ENCODE measurements at regions of chr1 and their contacts with region 1.

Region 1: GRCh38 chr1:116570358-116571200 is at the start of gene CD58:
- DNase-seq: peak; percentile 84
- ATAC-seq: peak; percentile 86
- H3K4me3 Mint-ChIP-seq: peak within 1 kb of the TSS; percentile 99
- H3K27ac Mint-ChIP-seq: peak within 1 kb of the TSS; percentile 95
- H3K4me1 Mint-ChIP-seq: peaks cover 80% of the 10 kb centered on the region
- H3K27me3 Mint-ChIP-seq: no peaks in the 10 kb centered on the region
- CTCF ChIP-seq: no peak
- total RNA-seq, gene CD58: 146 and 160 TPM in 2 replicates

Region 2: DNA sequence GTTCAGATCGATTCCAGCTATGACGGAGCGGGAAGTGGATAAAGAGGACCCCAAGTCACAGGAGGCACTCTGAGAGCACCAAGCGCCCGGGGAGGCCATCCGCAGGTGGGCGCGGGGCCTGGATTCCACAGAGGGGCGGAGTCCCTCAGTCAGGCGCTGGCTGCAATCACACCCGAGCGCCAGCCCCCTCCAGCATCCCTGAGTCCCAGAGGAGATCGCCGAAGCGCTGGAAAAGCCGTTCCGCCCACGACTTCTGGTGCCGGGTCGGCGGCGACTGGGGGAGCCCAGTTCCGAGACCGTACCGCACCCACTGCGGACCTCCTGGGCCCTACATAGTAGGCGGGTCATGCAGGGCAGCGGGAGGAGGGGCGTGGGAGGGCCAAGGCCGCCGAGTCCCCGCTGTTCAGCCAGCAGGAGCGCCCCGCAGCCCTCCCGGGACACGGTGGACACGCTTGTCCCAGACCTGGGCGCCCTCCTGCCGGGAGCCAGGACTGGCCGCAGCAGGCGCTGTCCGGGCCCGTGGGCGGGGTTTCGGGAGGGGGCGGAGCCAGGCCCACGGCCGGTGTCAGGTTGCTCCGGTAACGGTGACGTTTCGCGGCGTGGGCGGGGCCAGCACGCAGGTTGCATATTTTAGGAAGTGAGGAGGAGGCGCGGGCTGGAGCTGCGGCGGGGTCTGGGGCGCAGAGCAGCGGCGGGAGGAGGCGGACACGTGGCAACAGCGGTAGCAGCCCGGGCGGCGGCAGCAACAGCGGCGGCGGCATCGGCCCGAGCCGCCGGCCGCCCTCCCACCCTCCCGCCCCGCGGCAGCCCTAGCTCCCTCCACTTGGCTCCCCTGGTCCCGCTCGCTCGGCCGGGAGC is 197.8 kb before region 1 on chr1 and contains the start of gene ATP1A1:
- CTCF ChIA-PET with region 1: no interaction called
- POLR2A ChIA-PET with region 1: interaction called, 8 read pairs
- intact Hi-C with region 1: loop called (anchors 1 kb)
- DNase-seq: peak; percentile 99
- ATAC-seq: peak; percentile 75
- H3K4me3 Mint-ChIP-seq: peak within 1 kb of the TSS; percentile 91
- H3K27ac Mint-ChIP-seq: peak within 1 kb of the TSS; percentile 94
- H3K4me1 Mint-ChIP-seq: peaks cover 38% of the 10 kb centered on the region
- H3K27me3 Mint-ChIP-seq: peaks cover 2% of the 10 kb centered on the region
- CTCF ChIP-seq: no peak
- total RNA-seq, gene ATP1A1: 139 and 151 TPM in 2 replicates

Region 3: GRCh38 chr1:116514708-116515525 is 55.7 kb before region 1 on chr1:
- CTCF ChIA-PET with region 1: interaction called, 3 read pairs
- POLR2A ChIA-PET with region 1: interaction called, 24 read pairs
- intact Hi-C with region 1: no loop called
- DNase-seq: no peak
- ATAC-seq: peak; percentile 76
- H3K4me3 Mint-ChIP-seq: peak overlapping the region; percentile 56
- H3K27ac Mint-ChIP-seq: peak overlapping the region; percentile 92
- H3K4me1 Mint-ChIP-seq: peaks cover 59% of the 10 kb centered on the region
- H3K27me3 Mint-ChIP-seq: no peaks in the 10 kb centered on the region
- CTCF ChIP-seq: no peak

Region 4: DNA sequence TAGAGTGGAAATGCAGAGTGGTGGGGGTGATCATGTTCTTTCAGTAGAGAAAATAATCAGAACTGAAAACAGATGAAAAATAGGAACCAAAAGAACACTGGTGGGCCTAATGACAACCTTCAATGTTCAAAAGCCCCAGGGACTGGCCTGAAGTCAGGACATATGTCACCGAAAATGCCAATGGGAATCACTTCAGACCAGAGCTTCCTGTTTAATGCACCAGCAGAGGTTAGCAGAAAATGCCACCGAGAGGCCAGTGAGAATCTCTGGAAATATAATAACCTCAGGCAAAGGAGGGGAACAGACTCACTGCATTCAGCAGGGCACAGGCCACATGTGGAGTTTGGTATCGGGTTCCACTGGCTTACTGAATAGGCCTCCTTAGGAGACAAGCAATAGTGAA is 16.2 kb after region 1 on chr1:
- CTCF ChIA-PET with region 1: interaction called, 14 read pairs
- POLR2A ChIA-PET with region 1: interaction called, 10 read pairs
- intact Hi-C with region 1: loop called (anchors 1 kb)
- DNase-seq: no peak
- ATAC-seq: peak; percentile 76
- H3K4me3 Mint-ChIP-seq: peak overlapping the region; percentile 63
- H3K27ac Mint-ChIP-seq: peak overlapping the region; percentile 83
- H3K4me1 Mint-ChIP-seq: peaks cover 30% of the 10 kb centered on the region
- H3K27me3 Mint-ChIP-seq: no peaks in the 10 kb centered on the region
- CTCF ChIP-seq: no peak

Region 5: DNA sequence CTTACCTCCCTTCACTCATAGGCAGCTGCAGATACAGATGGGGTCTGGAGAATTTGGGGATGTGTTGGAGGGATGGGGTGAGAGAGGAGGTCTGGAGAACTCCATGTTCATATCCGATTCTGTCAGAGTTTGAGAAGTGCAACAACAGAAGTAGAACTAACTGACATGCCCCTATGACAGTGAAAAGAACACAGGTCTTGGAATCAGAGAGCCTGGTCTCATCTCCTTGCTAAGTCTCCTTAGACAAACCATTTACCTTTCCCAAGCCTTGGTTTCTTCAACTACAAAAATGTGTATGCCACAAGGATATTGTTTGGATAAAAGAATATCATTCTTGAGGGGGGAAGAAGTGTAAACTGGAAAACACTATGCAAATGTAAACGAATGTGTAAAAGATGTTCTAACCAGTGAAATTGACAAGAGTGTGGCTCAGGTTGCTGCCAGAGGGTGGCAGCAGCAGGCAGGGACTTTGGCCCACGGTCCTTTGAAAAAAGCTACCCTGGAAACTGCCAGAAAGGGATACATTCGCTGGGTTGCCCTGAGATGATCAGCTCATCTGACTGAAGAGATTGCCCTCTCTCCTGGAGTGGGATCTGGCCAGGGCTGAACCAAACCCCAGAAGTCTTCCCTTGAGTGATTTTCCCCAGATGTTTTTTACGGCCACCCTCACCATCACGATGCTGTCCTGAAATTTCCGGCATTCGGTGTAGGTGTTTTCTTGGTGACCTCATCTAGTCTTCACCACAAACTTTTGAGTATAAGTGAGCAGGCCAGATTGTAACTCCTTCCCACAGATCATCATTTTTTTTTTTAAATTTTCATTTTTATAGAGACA is 166.7 kb after region 1 on chr1:
- CTCF ChIA-PET with region 1: interaction called, 10 read pairs
- POLR2A ChIA-PET with region 1: interaction called, 4 read pairs
- intact Hi-C with region 1: loop called (anchors 1 kb)
- DNase-seq: peak; percentile 34
- ATAC-seq: peak; percentile 70
- H3K4me3 Mint-ChIP-seq: peak overlapping the region; percentile 45
- H3K27ac Mint-ChIP-seq: peak overlapping the region; percentile 4
- H3K4me1 Mint-ChIP-seq: peaks cover 25% of the 10 kb centered on the region
- H3K27me3 Mint-ChIP-seq: no peaks in the 10 kb centered on the region
- CTCF ChIP-seq: peak; percentile 45

Region 6: GRCh38 chr1:117121776-117122697 is 551.5 kb after region 1 on chr1:
- CTCF ChIA-PET with region 1: no interaction called
- POLR2A ChIA-PET with region 1: no interaction called
- intact Hi-C with region 1: loop called (anchors 2 kb)
- DNase-seq: peak; percentile 76
- ATAC-seq: peak; percentile 88
- H3K4me3 Mint-ChIP-seq: peak overlapping the region; percentile 88
- H3K27ac Mint-ChIP-seq: peak overlapping the region; percentile 54
- H3K4me1 Mint-ChIP-seq: peaks cover 13% of the 10 kb centered on the region
- H3K27me3 Mint-ChIP-seq: peaks cover 2% of the 10 kb centered on the region
- CTCF ChIP-seq: no peak

Measured in activated B cell treated with CpG ODN at 0.5 μM for 24 hours (primary cell).